Right ventricle myocardium inferior (tissue), 1 donor: ENCODE measurements at regions of chr19 and their contacts with region 1.

Region 1: DNA sequence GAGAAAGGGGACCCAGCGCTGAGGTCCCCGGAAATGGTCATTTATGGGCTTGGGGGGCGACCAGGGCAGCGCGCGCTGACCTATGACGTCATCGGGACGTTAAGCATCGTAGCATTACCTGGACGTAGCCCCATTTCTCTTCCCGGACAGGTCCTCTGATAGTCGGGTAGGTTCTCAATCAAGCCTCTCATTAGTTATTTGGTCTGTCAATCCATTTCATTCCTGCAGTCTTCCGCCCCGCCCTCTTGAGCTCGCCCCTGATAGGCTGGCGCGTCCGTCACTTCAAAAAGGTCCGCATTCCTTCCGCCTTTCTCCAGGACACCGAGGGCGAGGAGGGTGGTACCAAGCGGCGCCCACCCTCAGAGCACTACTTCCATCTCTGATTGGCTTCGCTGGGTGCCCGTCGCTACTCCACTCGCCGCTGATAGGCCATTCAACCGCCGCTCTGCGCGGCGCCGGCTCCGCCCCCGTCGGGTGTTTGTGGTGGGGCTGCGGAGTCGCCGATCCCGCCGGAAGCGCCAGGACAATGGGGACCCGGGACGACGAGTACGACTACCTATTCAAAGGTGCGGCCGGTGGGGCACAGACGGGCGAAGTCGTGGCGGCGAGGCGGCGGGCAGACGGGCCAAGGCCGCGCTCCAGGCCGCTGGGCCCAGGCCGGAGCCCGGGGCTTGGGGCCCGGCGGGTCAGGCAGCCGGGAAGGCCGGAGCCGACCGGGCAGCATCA is at the start of gene RAB11B:
- DNase-seq: peak; percentile 99
- ATAC-seq: peak; percentile 93
- total RNA-seq, gene RAB11B: 144 TPM

Region 2: GRCh38 chr19:8361921-8362793 is 27.9 kb before region 1 on chr19:
- intact Hi-C with region 1: loop called (anchors 1 kb)
- DNase-seq: peak; percentile 95
- ATAC-seq: peak; percentile 76

Region 3: DNA sequence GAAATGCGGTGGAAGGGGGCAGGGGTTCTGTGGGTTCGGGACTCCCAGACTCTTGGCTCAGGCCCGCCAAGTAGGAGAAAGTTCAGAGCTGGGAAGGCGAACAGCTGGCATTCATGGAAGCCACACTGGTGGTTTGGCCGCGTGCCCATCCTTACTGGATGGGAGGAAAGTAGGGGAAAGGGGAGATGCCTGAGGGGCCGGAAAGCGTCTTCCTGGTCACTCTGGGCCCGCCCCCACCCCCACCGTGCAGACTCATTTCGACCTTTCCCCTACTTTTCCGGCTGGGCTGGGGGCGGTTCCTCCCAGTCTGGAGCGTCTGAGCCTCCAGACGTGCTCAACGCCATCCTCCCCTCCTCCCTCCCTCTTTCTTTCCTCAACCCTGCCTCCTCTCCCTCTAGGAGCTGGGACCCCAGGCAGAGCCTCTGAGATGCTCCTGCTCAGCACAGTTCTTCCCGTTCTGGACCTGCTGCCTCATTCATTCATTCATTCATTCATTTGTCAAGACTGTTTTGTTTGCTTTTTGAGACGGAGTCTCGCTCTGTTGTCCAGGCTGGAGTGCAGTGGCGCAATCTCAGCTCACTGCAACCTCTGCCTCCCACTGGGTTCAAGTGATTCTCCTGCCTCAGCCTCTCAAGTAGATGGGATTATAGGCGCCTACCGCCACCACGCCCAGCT is 22.6 kb before region 1 on chr19:
- intact Hi-C with region 1: loop called (anchors 1 kb)
- DNase-seq: peak; percentile 94
- ATAC-seq: peak; percentile 73